ENCODE measurements at regions of chr10 and their contacts with region 1.

Region 1: DNA sequence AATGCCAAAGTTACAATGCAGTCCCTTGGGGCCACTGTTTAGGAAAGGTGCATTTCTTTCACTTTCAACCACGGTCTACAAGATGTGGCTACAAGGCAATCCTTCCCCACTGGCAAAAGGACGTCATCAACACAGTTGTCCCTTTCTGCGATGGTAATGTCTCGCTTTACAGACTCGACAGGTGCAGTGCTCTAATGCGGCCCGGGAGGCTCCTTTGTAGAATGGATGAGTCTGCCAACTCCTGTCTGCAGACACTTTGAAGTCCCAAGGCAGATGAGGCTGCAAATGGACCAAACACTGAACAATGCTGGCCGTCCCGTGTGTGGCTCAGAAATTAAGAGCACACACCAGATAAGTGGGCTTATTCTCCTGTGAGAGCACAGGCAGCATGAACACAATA is 133.7 kb downstream of the PIP4K2A start:
- DNase-seq: no peak
- H3K4me3 ChIP-seq: no peak overlapping the region
- H3K27ac ChIP-seq: no peak overlapping the region
- H3K4me1 ChIP-seq: no peaks in the 10 kb centered on the region
- H3K27me3 ChIP-seq: no peaks in the 10 kb centered on the region
- CTCF ChIP-seq: no peak
- EP300 ChIP-seq: no peak
- POLR2A ChIP-seq: no peak

Region 2: GRCh38 chr10:22340362-22341189 is 240.1 kb before region 1 on chr10:
- intact Hi-C with region 1: loop called (anchors 10 kb)
- DNase-seq: no peak
- H3K4me3 ChIP-seq: peak overlapping the region; percentile 81 to 93 (median 86)
- H3K27ac ChIP-seq: peak overlapping the region; percentile 96 to 98 (median 98)
- H3K4me1 ChIP-seq: peaks cover 33 to 44% (median 37%) of the 10 kb centered on the region in 4 donors
- H3K27me3 ChIP-seq: peaks cover 30 to 83% (median 79%) of the 10 kb centered on the region in 4 donors
- CTCF ChIP-seq: no peak
- EP300 ChIP-seq: no peak
- POLR2A ChIP-seq: peak; percentile 6